Ascending aorta (tissue), 2 donors: ENCODE measurements at regions of chr9 and their contacts with region 1.

Region 1: DNA sequence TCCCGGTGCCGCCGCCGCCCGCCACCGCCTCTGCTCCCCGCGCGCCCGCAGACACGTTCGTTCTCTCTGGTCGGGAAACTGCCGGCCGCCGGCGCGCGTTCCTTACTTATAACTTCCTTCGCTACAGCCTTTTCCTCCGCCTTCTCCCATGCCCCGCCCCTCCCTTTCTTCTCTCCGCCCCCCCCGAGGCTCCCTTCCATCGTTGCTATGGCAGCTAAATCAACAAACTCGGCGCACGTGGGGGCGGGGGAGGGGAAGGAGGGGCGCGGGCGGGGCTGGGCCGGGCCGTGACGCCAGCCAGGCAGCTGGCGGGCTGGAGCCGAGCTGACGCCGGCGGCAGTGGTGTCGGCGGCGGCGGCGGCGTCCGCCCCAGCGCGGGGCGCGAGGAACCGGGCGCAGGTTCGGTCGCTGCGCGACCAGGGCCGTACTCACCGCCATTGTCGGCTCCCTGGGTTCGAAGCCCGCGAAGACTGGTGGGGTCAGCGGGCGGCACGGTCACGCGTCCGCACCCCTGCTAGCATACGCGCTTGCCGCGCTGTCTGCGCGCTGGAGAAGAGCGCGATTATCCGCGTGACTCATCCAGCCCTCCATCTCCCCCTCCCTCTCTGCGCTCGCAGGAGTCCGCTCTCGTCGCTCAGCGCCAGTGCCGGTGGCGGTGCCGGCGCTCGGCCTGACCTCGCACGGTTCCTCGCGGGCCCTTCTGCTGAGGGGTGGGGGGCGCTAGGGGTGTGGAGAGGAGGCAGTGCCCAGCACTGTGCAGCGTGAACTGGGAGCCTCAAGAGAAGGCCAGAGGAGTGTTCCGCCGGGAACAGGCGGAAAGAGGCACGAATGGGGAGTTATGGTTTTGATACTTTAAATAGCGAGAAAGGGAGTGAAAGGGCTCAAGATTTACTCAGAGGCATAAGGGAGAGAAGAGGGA is at the start of gene KLF4:
- DNase-seq: peak; percentile 63 to 95
- H3K4me3 ChIP-seq: peak within 1 kb of the TSS; percentile 95
- H3K27ac ChIP-seq: peak within 1 kb of the TSS; percentile 92 to 96
- H3K4me1 ChIP-seq: peaks cover 0 to 22% of the 10 kb centered on the region in 2 donors
- H3K27me3 ChIP-seq: no peaks in the 10 kb centered on the region
- CTCF ChIP-seq: no peak
- total RNA-seq, gene KLF4: 444 TPM

Region 2: GRCh38 chr9:107282753-107283625 is 207.0 kb before region 1 on chr9 and contains the start of gene RAD23B:
- intact Hi-C with region 1: loop called (anchors 5 kb)
- DNase-seq: peak; percentile 93 to 99
- H3K4me3 ChIP-seq: peak within 1 kb of the TSS; percentile 82 to 95
- H3K27ac ChIP-seq: peak within 1 kb of the TSS; percentile 98 to 99
- H3K4me1 ChIP-seq: peaks cover 0 to 8% of the 10 kb centered on the region in 2 donors
- H3K27me3 ChIP-seq: no peaks in the 10 kb centered on the region
- CTCF ChIP-seq: no peak
- total RNA-seq, gene RAD23B: 57.7 TPM

Region 3: DNA sequence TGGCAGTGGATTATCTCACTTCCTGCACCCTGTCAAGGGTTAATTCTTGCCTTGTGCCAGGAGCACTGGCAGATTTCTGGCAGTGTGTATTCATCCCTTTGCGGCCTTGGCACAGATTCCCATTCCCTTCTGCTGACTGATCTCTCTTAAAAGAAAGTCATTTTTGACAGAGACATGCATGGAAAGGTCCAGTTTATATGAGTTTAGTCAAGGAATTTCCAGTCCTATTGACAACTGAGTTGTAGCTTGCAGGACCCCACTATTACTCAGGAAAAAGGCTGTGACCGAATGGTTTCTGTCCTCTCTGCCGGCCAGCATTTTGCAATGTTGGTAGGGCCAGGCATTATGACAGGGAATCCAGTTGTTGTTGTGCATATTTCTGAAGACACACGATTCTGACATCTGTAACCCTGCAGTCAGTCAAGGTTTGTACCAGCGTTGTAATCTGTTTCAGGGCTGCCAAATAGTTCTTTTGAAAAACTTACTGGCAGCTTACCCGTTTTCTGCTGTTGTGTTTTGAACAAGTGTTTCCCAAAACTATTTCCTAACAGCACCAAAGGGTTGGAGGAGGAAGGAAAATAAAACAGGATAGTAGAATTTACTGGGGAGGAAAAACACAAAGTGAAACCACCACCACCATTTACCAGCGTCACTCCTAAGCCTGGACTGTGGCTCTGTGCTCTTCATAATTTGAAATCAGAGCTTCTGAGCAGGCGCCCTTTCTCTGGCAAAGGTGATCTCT is 243.0 kb after region 1 on chr9:
- intact Hi-C with region 1: loop called (anchors 2 kb)
- DNase-seq: peak in 1 of 2 donors; percentile 87
- H3K4me3 ChIP-seq: peak overlapping the region; percentile 16 to 40
- H3K27ac ChIP-seq: peak overlapping the region; percentile 83 to 86
- H3K4me1 ChIP-seq: peaks cover 0 to 16% of the 10 kb centered on the region in 2 donors
- H3K27me3 ChIP-seq: no peaks in the 10 kb centered on the region
- CTCF ChIP-seq: no peak

Region 4: GRCh38 chr9:107756096-107756495 is 266.1 kb after region 1 on chr9:
- intact Hi-C with region 1: no loop called
- DNase-seq: no peak
- H3K4me3 ChIP-seq: no peak overlapping the region
- H3K27ac ChIP-seq: no peak overlapping the region
- H3K4me1 ChIP-seq: peaks cover 9 to 15% of the 10 kb centered on the region in 2 donors
- H3K27me3 ChIP-seq: no peaks in the 10 kb centered on the region
- CTCF ChIP-seq: no peak

Region 5: GRCh38 chr9:107847978-107848964 is 358.3 kb after region 1 on chr9:
- intact Hi-C with region 1: loop called (anchors 5 kb)
- DNase-seq: no peak
- H3K4me3 ChIP-seq: no peak overlapping the region
- H3K27ac ChIP-seq: peak overlapping the region; percentile 62 to 68
- H3K4me1 ChIP-seq: peaks cover 0 to 10% of the 10 kb centered on the region in 2 donors
- H3K27me3 ChIP-seq: no peaks in the 10 kb centered on the region
- CTCF ChIP-seq: no peak

Region 6: GRCh38 chr9:108142504-108143201 is 652.7 kb after region 1 on chr9:
- intact Hi-C with region 1: loop called (anchors 5 kb)
- DNase-seq: peak; percentile 25 to 93
- H3K4me3 ChIP-seq: no peak overlapping the region
- H3K27ac ChIP-seq: peak overlapping the region; percentile 69 to 80
- H3K4me1 ChIP-seq: peaks cover 5 to 11% of the 10 kb centered on the region in 2 donors
- H3K27me3 ChIP-seq: no peaks in the 10 kb centered on the region
- CTCF ChIP-seq: no peak

Region 7: DNA sequence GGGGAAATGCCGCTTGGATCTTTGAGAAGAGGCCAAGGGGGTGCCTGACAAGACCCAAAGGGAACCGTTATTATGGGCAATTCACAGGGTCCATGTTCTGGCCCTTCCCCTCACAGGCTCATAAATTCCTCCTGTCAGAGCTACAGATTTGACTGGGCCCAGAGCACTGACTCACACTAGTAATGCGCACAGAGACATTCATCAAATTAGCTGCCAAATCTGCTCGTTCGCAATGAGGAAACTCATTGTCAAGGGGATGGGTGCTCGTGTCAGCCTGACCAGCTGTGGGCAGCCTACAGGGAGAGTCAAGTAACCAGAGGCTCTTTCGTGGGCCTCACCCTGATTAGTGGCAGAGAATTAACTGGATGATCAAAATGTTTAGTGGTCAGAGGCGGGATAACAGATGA is 988.5 kb after region 1 on chr9:
- intact Hi-C with region 1: loop called (anchors 2 kb)
- DNase-seq: peak; percentile 25 to 83
- H3K4me3 ChIP-seq: peak overlapping the region in 1 of 2 donors; percentile 38
- H3K27ac ChIP-seq: peak overlapping the region; percentile 88 to 91
- H3K4me1 ChIP-seq: peaks cover 3 to 19% of the 10 kb centered on the region in 2 donors
- H3K27me3 ChIP-seq: no peaks in the 10 kb centered on the region
- CTCF ChIP-seq: no peak